Activated CD8-positive, alpha-beta T cell treated with anti-CD3 and anti-CD28 coated beads for 36 hours (primary cell): ENCODE measurements at regions of chr14 and their contacts with region 1.

Region 1: DNA sequence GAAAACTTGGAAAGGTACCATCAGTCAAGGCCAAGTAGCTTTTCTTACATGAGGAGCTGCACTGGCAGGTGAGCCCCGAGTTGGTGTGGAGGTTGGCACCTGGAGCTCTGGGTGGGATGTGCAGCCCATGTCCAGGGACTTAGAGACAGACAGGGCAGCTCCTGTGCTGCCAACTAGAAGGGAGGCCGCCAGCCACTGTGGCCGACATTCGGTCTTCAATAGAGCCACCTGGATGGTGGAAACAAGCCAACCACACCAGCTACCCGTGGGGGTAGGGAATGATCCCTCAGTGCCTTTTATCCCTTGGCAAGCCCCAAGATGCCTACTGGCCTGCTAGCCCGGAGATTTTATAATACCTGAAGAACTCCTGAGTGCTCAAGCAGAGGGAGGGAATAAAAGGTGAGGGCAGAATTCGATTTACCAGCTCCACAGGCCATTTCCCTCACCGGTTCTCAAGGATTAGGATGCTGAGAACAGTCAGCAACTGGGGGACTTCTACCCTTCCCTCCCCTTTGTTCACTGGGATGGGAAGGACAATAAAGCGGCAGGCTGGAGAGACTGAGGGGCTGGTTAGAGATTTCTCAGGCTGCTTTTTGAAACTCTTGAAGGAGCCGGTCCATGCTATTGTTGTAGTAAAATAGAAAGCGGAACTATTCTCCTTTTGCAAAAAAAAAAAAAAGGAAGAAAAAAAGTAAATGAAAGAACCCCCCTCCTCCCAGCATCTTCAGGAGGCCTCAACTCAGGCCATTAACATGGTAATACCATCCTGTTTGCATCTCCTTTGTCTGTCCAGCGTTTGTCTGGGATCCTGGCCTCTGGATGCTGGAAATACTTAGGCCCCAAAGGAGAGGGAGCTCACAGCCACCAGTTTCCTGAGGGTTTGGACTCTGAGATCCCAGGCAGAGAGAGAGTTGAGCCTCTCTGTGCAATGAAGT is 321.6 kb downstream of the ZFP36L1 start:
- DNase-seq: no peak
- ATAC-seq: no peak
- H3K4me3 Mint-ChIP-seq: no peak overlapping the region
- H3K27ac Mint-ChIP-seq: no peak overlapping the region
- H3K4me1 Mint-ChIP-seq: peaks cover 27% of the 10 kb centered on the region
- H3K27me3 Mint-ChIP-seq: no peaks in the 10 kb centered on the region
- CTCF ChIP-seq: no peak

Region 2: DNA sequence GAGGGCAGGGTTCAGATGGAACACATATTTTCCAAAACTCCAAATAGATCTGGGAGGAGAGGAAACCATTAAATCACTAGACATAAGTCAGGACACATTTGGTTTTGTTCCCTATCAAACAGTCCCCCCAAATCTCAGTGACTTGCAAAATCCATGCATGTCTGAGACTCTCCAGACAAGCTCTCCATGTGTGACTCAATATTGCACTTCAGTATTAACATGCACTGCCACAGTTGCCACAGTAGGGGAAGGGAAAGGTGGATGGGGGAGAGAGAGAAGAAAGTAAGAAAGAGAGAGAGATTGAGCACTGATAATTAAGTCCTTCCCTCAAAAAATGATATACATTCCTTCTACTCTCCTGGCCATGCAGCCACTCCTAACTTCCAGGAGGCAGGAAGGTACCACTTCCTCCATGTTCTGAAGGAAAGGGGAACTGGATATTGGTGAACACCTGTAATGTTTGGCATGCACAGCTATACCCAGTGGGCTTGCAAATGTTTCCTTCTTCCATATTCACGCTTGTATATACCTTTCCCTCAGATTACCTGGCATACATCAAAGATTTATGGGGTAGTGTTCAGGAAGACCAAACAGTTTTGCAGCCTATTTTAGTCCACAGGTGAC is 11.6 kb after region 1 on chr14:
- CTCF ChIA-PET with region 1: interaction called, 12 read pairs
- POLR2A ChIA-PET with region 1: no interaction called
- intact Hi-C with region 1: no loop called
- DNase-seq: no peak
- ATAC-seq: no peak
- H3K4me3 Mint-ChIP-seq: no peak overlapping the region
- H3K27ac Mint-ChIP-seq: no peak overlapping the region
- H3K4me1 Mint-ChIP-seq: peaks cover 59% of the 10 kb centered on the region
- H3K27me3 Mint-ChIP-seq: no peaks in the 10 kb centered on the region
- CTCF ChIP-seq: no peak